ENCODE measurements at regions of chr16 and their contacts with region 1.

Region 1: GRCh38 chr16:8905168-8905762 is 23.1 kb downstream of the LITAFD start:
- H3K4me3 Mint-ChIP-seq: no peak overlapping the region
- H3K27ac Mint-ChIP-seq: no peak overlapping the region
- H3K4me1 Mint-ChIP-seq: peaks cover 13% of the 10 kb centered on the region
- H3K27me3 Mint-ChIP-seq: no peaks in the 10 kb centered on the region

Region 2: GRCh38 chr16:9008601-9009260 is 103.5 kb after region 1 on chr16:
- intact Hi-C with region 1: loop called (anchors 5 kb)
- H3K4me3 Mint-ChIP-seq: peak overlapping the region; percentile 46
- H3K27ac Mint-ChIP-seq: no peak overlapping the region
- H3K4me1 Mint-ChIP-seq: peaks cover 16% of the 10 kb centered on the region
- H3K27me3 Mint-ChIP-seq: peaks cover 28% of the 10 kb centered on the region

Region 3: GRCh38 chr16:9102379-9102778 is 197.1 kb after region 1 on chr16:
- intact Hi-C with region 1: loop called (anchors 10 kb)
- H3K4me3 Mint-ChIP-seq: no peak overlapping the region
- H3K27ac Mint-ChIP-seq: no peak overlapping the region
- H3K4me1 Mint-ChIP-seq: peaks cover 81% of the 10 kb centered on the region
- H3K27me3 Mint-ChIP-seq: no peaks in the 10 kb centered on the region

Region 4: GRCh38 chr16:9134739-9135138 is 229.5 kb after region 1 on chr16:
- intact Hi-C with region 1: loop called (anchors 10 kb)
- H3K4me3 Mint-ChIP-seq: no peak overlapping the region
- H3K27ac Mint-ChIP-seq: no peak overlapping the region
- H3K4me1 Mint-ChIP-seq: peaks cover 14% of the 10 kb centered on the region
- H3K27me3 Mint-ChIP-seq: peaks cover 20% of the 10 kb centered on the region